ENCODE measurements at regions of chr15 and their contacts with region 1.

Region 1: DNA sequence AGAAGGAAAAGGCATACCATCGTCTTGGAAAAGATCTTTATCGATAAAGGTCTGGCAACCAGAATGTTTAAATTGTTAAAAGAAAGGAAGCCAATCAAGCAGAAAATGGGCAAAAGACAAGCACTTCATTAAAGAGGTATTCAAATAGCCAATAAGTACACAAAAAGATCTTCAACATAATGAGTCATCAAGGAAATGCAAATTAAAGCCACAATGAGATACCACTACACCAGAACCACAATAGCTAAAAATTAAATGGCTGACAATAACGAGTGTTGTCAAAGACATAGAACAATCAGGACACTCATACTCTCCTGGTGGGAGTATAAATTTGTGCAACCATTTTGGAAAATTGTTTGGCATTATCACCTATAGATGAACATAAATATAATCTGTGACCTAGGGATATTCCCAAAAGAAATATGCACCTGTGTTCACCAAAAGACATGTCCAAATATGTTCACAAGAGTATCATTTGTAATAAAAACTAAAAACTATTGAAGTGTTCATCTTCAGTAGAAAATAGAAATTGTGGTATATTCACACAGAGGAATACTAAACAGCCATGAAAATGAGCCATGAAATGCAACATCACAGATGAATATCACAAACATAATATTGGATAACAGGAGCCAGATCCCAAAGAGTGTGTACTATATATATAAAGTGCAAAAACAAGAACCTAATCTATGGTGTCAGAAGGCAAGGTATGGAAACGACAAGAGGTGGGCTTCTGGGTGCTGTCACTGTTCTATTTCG is 14.4 kb upstream of the BTBD1 start:
- DNase-seq: no peak
- H3K4me3 ChIP-seq: no peak overlapping the region
- H3K27ac ChIP-seq: no peak overlapping the region
- H3K4me1 ChIP-seq: no peaks in the 10 kb centered on the region
- H3K27me3 ChIP-seq: peaks cover 0 to 22% (median 0%) of the 10 kb centered on the region in 4 donors
- CTCF ChIP-seq: no peak
- EP300 ChIP-seq: no peak
- POLR2A ChIP-seq: no peak

Region 2: DNA sequence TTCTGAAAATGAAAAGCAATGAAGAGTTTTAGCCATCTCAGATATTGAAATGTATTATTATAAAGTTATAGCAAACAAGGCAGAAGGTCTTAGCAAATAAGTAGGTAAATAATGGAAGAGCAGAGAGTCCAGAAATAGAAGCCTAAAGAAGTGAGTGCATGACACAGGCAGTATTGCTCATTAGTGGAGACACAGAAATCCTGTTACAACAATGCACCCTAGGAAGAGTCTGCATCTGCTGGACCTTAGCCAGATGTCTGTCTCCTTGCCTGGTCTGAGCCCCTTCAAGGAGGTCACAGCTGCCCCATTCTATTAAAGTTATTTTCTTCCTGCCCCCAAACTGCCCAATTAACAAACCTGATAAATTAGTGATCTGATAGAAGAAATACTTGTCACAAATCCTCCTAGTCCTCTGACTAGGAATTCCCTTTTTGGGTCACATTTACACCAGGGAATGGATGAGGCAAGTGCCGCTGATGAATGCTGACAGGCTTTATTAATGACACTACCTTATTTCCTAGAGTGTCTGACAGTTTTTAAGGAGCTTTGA is 180.8 kb before region 1 on chr15:
- intact Hi-C with region 1: no loop called
- DNase-seq: no peak
- H3K4me3 ChIP-seq: no peak overlapping the region
- H3K27ac ChIP-seq: no peak overlapping the region
- H3K4me1 ChIP-seq: peaks cover 0 to 9% (median 0%) of the 10 kb centered on the region in 4 donors
- H3K27me3 ChIP-seq: no peaks in the 10 kb centered on the region
- CTCF ChIP-seq: no peak
- EP300 ChIP-seq: no peak
- POLR2A ChIP-seq: no peak

Region 3: GRCh38 chr15:82910721-82911120 is 170.7 kb before region 1 on chr15:
- intact Hi-C with region 1: no loop called
- DNase-seq: no peak
- H3K4me3 ChIP-seq: no peak overlapping the region
- H3K27ac ChIP-seq: no peak overlapping the region
- H3K4me1 ChIP-seq: no peaks in the 10 kb centered on the region
- H3K27me3 ChIP-seq: no peaks in the 10 kb centered on the region
- CTCF ChIP-seq: no peak
- EP300 ChIP-seq: no peak
- POLR2A ChIP-seq: no peak

Region 4: GRCh38 chr15:82999905-83000671 is 81.3 kb before region 1 on chr15:
- intact Hi-C with region 1: no loop called
- DNase-seq: no peak
- H3K4me3 ChIP-seq: peak overlapping the region in 3 of 4 donors; percentile 21 to 43 (median 33)
- H3K27ac ChIP-seq: peak overlapping the region in 2 of 4 donors; percentile 18 to 34
- H3K4me1 ChIP-seq: peaks cover 5 to 12% (median 9%) of the 10 kb centered on the region in 4 donors
- H3K27me3 ChIP-seq: no peaks in the 10 kb centered on the region
- CTCF ChIP-seq: peak; percentile 35 to 40 (median 38)
- EP300 ChIP-seq: no peak
- POLR2A ChIP-seq: no peak

Region 5: GRCh38 chr15:83036253-83036652 is 45.2 kb before region 1 on chr15:
- intact Hi-C with region 1: no loop called
- DNase-seq: no peak
- H3K4me3 ChIP-seq: no peak overlapping the region
- H3K27ac ChIP-seq: no peak overlapping the region
- H3K4me1 ChIP-seq: no peaks in the 10 kb centered on the region
- H3K27me3 ChIP-seq: no peaks in the 10 kb centered on the region
- CTCF ChIP-seq: no peak
- EP300 ChIP-seq: no peak
- POLR2A ChIP-seq: no peak

Region 6: DNA sequence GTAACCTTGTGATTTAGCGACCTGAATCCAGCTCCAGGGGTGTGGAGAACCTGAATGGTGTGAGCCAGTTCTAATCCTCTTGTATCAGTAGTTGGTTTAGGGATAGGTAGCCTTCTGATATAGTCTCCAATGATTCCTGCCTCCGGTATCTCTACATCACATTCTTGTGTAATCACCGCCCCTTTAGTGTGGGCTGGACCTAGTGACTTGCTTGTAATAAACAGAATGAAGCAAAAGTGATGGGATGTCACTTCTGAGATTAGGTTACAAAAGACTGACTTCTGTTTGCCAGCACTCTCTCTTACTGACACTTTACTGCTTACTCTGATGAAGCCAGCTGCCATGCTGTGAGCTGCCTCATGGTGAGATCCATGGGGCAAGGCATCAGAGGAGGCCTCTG is 62.8 kb after region 1 on chr15:
- intact Hi-C with region 1: loop called (anchors 10 kb)
- DNase-seq: no peak
- H3K4me3 ChIP-seq: no peak overlapping the region
- H3K27ac ChIP-seq: no peak overlapping the region
- H3K4me1 ChIP-seq: no peaks in the 10 kb centered on the region
- H3K27me3 ChIP-seq: no peaks in the 10 kb centered on the region
- CTCF ChIP-seq: no peak
- EP300 ChIP-seq: no peak
- POLR2A ChIP-seq: no peak